ENCODE measurements at regions of chr2 and their contacts with region 1.

Region 1: DNA sequence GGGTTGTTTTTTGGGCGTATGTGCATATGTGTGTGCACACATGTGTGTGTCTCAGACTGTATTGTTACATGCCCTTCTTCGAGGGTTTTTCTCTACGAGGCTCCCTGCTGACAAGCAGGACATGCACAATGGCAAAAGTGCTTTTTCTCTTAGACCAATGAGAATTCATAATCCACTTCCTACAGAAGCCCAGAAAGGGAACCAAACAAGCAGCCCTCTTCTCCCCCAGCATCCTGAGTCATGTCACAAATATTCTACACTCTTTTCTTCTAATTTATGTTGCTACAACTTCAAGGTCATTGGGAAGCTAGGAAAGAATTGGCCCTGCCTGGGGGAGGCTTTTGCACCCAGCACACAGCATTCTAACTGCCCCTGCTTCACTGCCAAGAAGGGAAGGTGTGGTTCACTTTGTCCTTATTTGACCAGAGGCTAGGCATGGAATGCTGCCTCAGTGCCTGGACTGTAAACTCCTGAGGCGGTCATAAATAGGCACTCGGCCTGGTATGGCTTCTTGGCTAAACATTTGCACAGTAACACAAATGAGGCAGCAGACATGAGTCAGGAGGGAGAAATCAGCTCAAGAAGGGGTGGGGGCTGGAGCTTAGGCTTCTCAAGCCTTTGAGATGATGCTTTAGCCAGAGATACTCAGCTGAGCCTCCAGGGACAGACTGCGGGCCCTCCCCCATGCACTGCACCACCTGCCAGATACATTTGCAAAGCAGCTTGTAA is 92.7 kb upstream of the KLF7 start:
- DNase-seq: peak; percentile 95
- H3K4me3 ChIP-seq: no peak overlapping the region
- H3K27ac ChIP-seq: peak overlapping the region; percentile 83 to 91 (median 84)
- H3K4me1 ChIP-seq: peaks cover 0 to 69% (median 57%) of the 10 kb centered on the region in 4 donors
- H3K27me3 ChIP-seq: no peaks in the 10 kb centered on the region
- CTCF ChIP-seq: peak in 2 of 4 experiments; percentile 14
- EP300 ChIP-seq: peak; percentile 37 to 97 (median 86)
- POLR2A ChIP-seq: no peak

Region 2: GRCh38 chr2:207223051-207223450 is 35.4 kb before region 1 on chr2:
- intact Hi-C with region 1: loop called (anchors 2 kb)
- DNase-seq: no peak
- H3K4me3 ChIP-seq: no peak overlapping the region
- H3K27ac ChIP-seq: no peak overlapping the region
- H3K4me1 ChIP-seq: peaks cover 0 to 43% (median 21%) of the 10 kb centered on the region in 4 donors
- H3K27me3 ChIP-seq: no peaks in the 10 kb centered on the region
- CTCF ChIP-seq: no peak
- EP300 ChIP-seq: no peak
- POLR2A ChIP-seq: no peak

Region 3: GRCh38 chr2:207334624-207335371 is 76.4 kb after region 1 on chr2:
- intact Hi-C with region 1: loop called (anchors 2 kb)
- DNase-seq: peak; percentile 88
- H3K4me3 ChIP-seq: peak overlapping the region in 2 of 4 donors; percentile 21 to 35
- H3K27ac ChIP-seq: peak overlapping the region; percentile 65 to 87 (median 83)
- H3K4me1 ChIP-seq: peaks cover 0 to 25% (median 19%) of the 10 kb centered on the region in 4 donors
- H3K27me3 ChIP-seq: no peaks in the 10 kb centered on the region
- CTCF ChIP-seq: no peak
- EP300 ChIP-seq: peak; percentile 16 to 79 (median 61)
- POLR2A ChIP-seq: no peak

Region 4: DNA sequence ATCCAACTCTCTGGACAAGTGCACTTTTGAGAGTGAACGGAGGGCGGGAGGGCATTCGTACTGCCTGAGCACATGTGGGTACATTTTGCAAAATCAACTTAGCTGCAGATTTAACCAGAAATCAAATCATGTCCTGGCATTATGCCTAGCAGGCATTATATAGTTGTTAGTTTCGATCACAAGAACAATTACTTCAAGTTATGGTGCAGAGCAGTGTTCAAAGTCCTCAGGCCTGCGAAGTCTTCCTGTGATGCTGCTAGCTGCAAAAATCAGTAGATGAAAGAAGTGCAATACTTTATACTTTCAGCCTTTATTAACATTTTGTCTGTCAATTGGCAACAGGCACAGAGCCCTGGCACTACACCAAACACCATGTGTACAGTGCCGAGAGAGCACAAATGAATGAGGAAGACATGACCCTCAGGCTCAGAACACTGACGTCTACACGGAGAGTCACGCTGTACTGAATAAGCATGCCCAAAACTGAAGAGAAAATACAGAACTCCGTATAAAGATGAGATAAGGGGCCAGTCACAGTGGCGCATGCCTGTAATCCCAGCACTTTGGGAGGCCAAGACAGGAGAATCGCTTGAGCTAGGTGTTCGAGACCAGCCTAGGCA is 179.2 kb after region 1 on chr2:
- intact Hi-C with region 1: no loop called
- DNase-seq: no peak
- H3K4me3 ChIP-seq: no peak overlapping the region
- H3K27ac ChIP-seq: no peak overlapping the region
- H3K4me1 ChIP-seq: no peaks in the 10 kb centered on the region
- H3K27me3 ChIP-seq: no peaks in the 10 kb centered on the region
- CTCF ChIP-seq: no peak
- EP300 ChIP-seq: no peak
- POLR2A ChIP-seq: no peak

Region 5: GRCh38 chr2:207828361-207829057 is 570.1 kb after region 1 on chr2:
- intact Hi-C with region 1: loop called (anchors 5 kb)
- DNase-seq: no peak
- H3K4me3 ChIP-seq: no peak overlapping the region
- H3K27ac ChIP-seq: peak overlapping the region in 3 of 4 donors; percentile 81 to 89 (median 81)
- H3K4me1 ChIP-seq: peaks cover 3 to 57% (median 56%) of the 10 kb centered on the region in 4 donors
- H3K27me3 ChIP-seq: no peaks in the 10 kb centered on the region
- CTCF ChIP-seq: no peak
- EP300 ChIP-seq: no peak
- POLR2A ChIP-seq: no peak